Sigmoid colon (tissue), 7 donors: ENCODE measurements at regions of chr14 and their contacts with region 1.

Region 1: DNA sequence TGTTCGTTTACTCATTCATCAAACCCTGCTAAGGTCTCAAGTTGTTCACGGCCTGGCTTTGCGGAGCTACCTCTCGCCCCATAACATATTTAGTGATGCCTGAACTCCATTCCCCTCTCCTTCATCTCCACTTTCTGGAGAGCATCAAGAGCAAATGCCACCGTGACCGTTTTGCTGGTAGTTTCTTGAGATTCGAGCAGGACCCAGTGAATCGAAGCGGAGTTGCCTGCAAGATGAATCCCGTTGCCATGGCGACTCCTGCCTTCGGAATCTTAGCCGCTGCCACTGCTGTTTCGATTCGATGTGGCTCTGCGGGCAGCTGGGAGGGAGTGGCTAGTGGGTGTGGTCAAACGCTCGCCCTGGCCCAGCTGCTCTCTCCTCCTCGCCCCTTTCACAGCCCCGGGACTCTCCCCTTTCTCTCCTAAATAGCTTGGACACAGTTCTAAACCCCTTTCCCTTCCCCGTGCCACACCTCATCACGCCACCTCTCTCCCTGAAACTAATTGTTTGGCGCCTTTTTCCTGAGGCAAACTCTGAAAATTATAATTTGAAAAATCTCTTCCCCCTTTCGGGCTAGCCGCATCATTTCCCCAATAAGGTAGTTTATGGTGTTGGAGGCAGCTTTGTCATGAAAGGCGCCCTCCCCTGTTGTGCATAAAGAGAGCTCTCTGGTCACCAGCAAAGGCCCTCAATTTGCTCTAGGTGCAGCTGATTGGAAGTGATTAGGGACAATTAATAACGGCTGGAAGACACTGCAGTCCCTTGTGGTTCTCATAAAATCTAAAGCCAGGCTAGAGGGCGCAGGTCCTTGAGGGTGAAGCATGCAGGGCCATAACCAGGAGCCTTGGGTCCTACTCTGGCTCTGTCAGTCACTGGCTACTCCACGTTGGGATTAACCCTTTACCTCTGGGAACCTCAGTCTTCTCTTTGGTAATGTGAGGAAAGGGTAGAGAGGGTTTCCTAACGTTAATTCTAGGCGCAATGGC is 1.6 kb downstream of the DAAM1 start:
- DNase-seq: peak; percentile 95
- H3K4me3 ChIP-seq: peak overlapping the region; percentile 69 to 95 (median 85)
- H3K27ac ChIP-seq: peak overlapping the region; percentile 95 to 99 (median 98)
- H3K4me1 ChIP-seq: peaks cover 0 to 50% (median 47%) of the 10 kb centered on the region in 4 donors
- H3K27me3 ChIP-seq: no peaks in the 10 kb centered on the region
- CTCF ChIP-seq: no peak
- EP300 ChIP-seq: no peak
- POLR2A ChIP-seq: no peak

Region 2: DNA sequence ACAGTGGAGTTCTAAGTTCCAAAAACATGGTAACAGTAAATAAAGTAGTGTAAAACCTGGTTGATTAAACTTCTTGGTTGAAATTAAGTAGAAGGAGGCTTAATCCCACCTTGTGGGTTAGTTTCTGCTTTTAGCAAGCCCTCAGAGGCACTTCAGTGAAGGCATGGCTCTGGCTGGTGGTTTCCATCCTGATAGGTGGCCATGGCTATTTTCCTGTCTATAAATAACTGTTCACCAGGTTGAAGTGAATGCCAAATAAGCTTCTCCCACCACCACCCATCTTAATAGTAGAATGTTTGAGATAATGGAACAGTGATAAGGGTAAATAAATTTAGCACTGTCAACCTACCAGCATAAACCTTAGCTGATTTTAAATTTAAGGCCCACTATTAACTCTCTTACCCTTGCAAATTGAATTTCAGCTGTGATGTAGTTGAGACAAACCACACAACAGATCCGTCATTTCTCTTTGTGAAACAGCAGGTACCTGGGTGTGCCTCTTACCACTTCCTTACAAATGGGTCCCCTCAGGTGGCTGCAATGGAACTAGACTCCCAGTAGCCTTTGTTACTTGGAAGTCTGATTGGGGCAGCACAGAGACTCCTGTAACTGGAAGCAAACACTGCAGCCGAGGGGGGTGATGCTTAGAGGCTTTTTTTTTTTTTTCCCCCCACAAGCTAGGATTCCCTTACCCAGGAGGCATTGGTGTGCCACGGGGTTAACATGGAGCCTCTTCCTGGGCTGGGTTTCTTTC is 39.8 kb after region 1 on chr14:
- intact Hi-C with region 1: no loop called
- DNase-seq: no peak
- H3K4me3 ChIP-seq: no peak overlapping the region
- H3K27ac ChIP-seq: peak overlapping the region in 1 of 4 donors; percentile 63
- H3K4me1 ChIP-seq: peaks cover 0 to 74% (median 58%) of the 10 kb centered on the region in 4 donors
- H3K27me3 ChIP-seq: no peaks in the 10 kb centered on the region
- CTCF ChIP-seq: no peak
- EP300 ChIP-seq: no peak
- POLR2A ChIP-seq: no peak

Region 3: DNA sequence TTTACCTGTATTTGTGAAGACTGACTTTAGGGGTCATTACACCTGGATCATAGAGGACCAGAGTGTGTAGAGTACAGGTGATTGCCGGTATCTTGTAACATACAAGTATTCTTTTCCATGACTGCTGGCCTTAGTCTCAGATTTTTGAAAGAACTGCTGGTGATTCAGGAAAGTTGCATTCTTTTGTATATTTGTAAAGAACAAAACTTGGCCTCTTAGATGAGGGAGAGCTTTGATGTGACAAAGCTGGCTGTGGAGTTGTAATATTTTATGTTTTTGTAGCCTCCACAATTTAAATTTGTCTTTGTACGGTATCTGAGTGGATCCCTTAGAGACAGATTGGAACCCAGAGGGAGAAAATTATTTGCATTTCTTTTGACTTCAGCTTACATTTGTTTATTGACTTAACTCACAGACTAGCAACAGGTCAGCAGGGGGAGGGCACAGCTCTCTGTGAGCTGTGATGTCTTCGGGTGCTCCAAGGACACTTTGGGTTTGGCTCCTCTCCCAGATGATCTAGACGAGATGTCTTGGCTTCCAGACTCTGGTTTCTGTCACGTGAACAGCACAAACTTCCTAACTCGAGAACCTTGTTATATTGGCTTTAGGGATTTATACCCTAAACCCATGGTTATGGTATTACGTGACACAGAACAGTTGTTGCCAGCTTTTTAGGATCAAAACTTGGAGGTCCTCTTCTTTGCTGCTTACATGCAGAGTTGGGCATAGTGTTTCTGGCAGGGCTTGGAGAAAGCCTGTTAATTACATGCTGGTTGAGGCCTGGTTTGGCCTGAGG is 64.3 kb after region 1 on chr14:
- intact Hi-C with region 1: loop called (anchors 2 kb)
- DNase-seq: peak; percentile 90
- H3K4me3 ChIP-seq: no peak overlapping the region
- H3K27ac ChIP-seq: peak overlapping the region; percentile 81 to 87 (median 85)
- H3K4me1 ChIP-seq: peaks cover 0 to 83% (median 74%) of the 10 kb centered on the region in 4 donors
- H3K27me3 ChIP-seq: no peaks in the 10 kb centered on the region
- CTCF ChIP-seq: no peak
- EP300 ChIP-seq: no peak
- POLR2A ChIP-seq: no peak

Region 4: GRCh38 chr14:59333668-59334067 is 143.6 kb after region 1 on chr14:
- intact Hi-C with region 1: loop called (anchors 5 kb)
- DNase-seq: peak; percentile 78
- H3K4me3 ChIP-seq: no peak overlapping the region
- H3K27ac ChIP-seq: peak overlapping the region; percentile 78 to 89 (median 84)
- H3K4me1 ChIP-seq: peaks cover 0 to 89% (median 78%) of the 10 kb centered on the region in 4 donors
- H3K27me3 ChIP-seq: no peaks in the 10 kb centered on the region
- CTCF ChIP-seq: no peak
- EP300 ChIP-seq: peak; percentile 45 to 93 (median 73)
- POLR2A ChIP-seq: no peak

Region 5: GRCh38 chr14:59428581-59429012 is 238.5 kb after region 1 on chr14:
- intact Hi-C with region 1: loop called (anchors 2 kb)
- DNase-seq: no peak
- H3K4me3 ChIP-seq: no peak overlapping the region
- H3K27ac ChIP-seq: peak overlapping the region; percentile 41 to 70 (median 61)
- H3K4me1 ChIP-seq: peaks cover 0 to 31% (median 21%) of the 10 kb centered on the region in 4 donors
- H3K27me3 ChIP-seq: no peaks in the 10 kb centered on the region
- CTCF ChIP-seq: peak; percentile 30 to 34 (median 32)
- EP300 ChIP-seq: no peak
- POLR2A ChIP-seq: no peak

Region 6: GRCh38 chr14:59464486-59465315 is 274.6 kb after region 1 on chr14:
- intact Hi-C with region 1: no loop called
- DNase-seq: peak; percentile 88
- H3K4me3 ChIP-seq: peak overlapping the region; percentile 53 to 80 (median 72)
- H3K27ac ChIP-seq: peak overlapping the region; percentile 86 to 87 (median 86)
- H3K4me1 ChIP-seq: peaks cover 0 to 19% (median 8%) of the 10 kb centered on the region in 4 donors
- H3K27me3 ChIP-seq: no peaks in the 10 kb centered on the region
- CTCF ChIP-seq: no peak
- EP300 ChIP-seq: no peak
- POLR2A ChIP-seq: no peak